Mammary epithelial cell (primary cell): ENCODE measurements at regions of chr16 and their contacts with region 1.

Region 1: DNA sequence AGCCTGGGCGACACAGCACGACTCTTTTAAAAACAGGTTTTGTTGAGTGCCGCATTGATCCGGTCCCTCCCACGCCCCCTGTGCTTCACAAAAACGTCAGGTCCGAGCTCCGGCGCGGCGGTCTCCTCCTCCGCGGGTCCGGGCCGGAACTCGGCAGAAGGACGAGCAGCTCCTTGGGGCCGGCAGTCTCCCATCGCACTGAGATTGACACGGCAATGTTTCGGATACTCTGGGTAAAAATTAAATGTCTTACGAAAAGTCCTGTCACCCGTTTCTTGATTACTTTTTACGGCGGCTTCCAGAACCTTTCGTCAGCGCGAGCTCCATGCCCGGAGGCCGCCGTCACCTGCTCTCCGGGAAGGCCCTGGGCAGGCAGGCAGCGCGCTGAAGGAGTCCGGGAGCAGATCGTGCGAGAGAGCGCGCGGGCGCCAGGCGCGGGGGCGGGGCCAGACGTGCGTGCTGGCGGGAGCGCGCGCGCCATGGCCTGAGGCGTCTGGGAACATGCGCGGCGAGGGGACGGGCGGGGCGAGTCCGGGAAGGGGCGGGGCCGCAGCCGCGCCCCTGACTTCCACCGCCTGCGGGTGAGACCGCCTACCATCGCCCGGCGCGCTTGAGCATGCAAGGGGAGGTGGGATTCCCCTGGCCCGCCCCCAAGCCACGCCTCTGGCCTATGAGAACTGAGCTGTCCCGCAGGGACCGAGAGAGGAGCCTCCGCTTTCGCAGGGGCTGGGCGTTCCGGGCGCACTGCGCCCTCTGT is 11.7 kb upstream of the SRL start:
- DNase-seq: peak; percentile 98
- H3K4me3 ChIP-seq: peak overlapping the region; percentile 66 to 86 (median 77)
- H3K27ac ChIP-seq: peak overlapping the region; percentile 71
- H3K4me1 ChIP-seq: no peaks in the 10 kb centered on the region
- H3K27me3 ChIP-seq: no peaks in the 10 kb centered on the region
- CTCF ChIP-seq: peak in 1 of 2 donors; percentile 4

Region 2: DNA sequence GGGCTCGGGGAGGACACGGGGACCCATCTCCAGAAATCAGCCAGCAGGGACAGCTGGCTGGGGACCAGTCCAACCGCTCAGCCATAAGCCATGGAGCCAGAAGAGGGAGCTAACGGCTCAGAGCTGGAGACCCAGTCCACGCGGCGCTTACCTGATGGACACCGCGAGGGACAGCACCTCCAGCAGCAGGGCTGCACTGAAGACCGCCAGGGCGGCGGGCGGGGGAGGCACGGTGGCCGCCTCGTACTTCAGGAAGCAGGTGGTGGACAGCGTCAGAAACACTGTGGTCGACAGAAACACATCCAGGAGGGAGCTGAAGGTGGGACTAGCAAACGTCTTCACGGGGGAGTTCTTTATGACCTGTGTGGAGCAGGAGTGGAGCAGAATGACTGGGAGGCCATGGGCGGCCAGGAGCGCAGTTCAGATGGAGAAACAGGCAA is 270.5 kb before region 1 on chr16:
- CTCF ChIA-PET with region 1: interaction called, 13 read pairs
- dilution Hi-C with region 1: no loop called
- in situ Hi-C with region 1: no loop called
- intact Hi-C with region 1: loop called (anchors 1 kb)
- DNase-seq: peak; percentile 58
- H3K4me3 ChIP-seq: no peak overlapping the region
- H3K27ac ChIP-seq: no peak overlapping the region
- H3K4me1 ChIP-seq: peaks cover 7% of the 10 kb centered on the region
- H3K27me3 ChIP-seq: no peaks in the 10 kb centered on the region
- CTCF ChIP-seq: peak; percentile 73 to 93

Region 3: GRCh38 chr16:4136229-4136813 is 117.3 kb before region 1 on chr16:
- CTCF ChIA-PET with region 1: no interaction called
- dilution Hi-C with region 1: no loop called
- in situ Hi-C with region 1: no loop called
- intact Hi-C with region 1: loop called (anchors 1 kb)
- DNase-seq: peak; percentile 90
- H3K4me3 ChIP-seq: no peak overlapping the region
- H3K27ac ChIP-seq: peak overlapping the region; percentile 82
- H3K4me1 ChIP-seq: peaks cover 27% of the 10 kb centered on the region
- H3K27me3 ChIP-seq: no peaks in the 10 kb centered on the region
- CTCF ChIP-seq: peak; percentile 26 to 48

Region 4: GRCh38 chr16:4217204-4218131 is 36.1 kb before region 1 on chr16:
- CTCF ChIA-PET with region 1: interaction called, 4 read pairs
- dilution Hi-C with region 1: loop called (anchors 5 kb)
- in situ Hi-C with region 1: no loop called
- intact Hi-C with region 1: no loop called
- DNase-seq: no peak
- H3K4me3 ChIP-seq: no peak overlapping the region
- H3K27ac ChIP-seq: no peak overlapping the region
- H3K4me1 ChIP-seq: peaks cover 22% of the 10 kb centered on the region
- H3K27me3 ChIP-seq: no peaks in the 10 kb centered on the region
- CTCF ChIP-seq: no peak

Region 5: DNA sequence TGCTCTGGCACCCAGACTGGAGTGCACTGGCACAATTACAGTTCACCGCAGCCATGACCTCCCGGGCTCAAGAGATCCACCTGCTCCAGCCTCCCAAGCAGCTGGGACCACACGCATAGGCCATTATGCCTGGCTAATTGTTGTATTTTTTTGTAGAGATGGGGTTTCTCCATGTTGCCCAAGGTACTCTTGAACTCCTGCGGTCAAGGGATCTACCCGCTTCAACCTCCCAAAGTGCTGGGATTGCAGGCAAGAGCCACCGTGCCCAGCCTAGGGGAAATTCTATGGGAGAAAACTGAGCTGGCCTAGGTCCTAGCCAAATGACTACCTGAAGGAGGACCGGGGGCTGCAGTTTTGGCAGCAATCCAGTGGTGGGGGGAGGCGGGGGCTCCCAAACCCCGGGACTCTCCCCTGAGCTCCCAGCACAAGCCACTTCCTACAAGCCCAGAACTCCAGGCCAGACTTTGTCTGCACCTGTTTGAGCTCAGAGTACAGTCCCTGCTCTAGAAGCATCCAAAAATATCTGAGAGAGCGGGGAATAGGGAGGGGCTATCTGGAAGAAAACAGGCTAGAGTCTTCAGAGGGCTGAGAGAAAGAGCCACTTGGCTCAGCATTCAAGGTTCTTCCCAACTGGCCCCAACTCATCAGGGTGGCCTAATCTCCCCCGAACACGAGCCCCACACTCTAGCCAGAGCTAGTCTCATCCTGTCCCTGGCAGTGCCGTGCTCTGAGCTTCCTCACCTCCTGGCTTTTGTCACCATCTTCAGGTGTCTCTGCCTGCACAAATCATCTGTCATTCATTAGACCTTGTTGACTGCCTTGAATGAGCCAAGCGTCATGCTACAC is 20.8 kb before region 1 on chr16:
- CTCF ChIA-PET with region 1: no interaction called
- dilution Hi-C with region 1: no loop called
- in situ Hi-C with region 1: no loop called
- intact Hi-C with region 1: no loop called
- DNase-seq: peak; percentile 6
- H3K4me3 ChIP-seq: no peak overlapping the region
- H3K27ac ChIP-seq: no peak overlapping the region
- H3K4me1 ChIP-seq: no peaks in the 10 kb centered on the region
- H3K27me3 ChIP-seq: peaks cover 5% of the 10 kb centered on the region
- CTCF ChIP-seq: no peak

Region 6: GRCh38 chr16:4330277-4330874 is 76.8 kb after region 1 on chr16:
- CTCF ChIA-PET with region 1: no interaction called
- dilution Hi-C with region 1: no loop called
- in situ Hi-C with region 1: no loop called
- intact Hi-C with region 1: loop called (anchors 1 kb)
- DNase-seq: peak; percentile 32
- H3K4me3 ChIP-seq: no peak overlapping the region
- H3K27ac ChIP-seq: no peak overlapping the region
- H3K4me1 ChIP-seq: peaks cover 10% of the 10 kb centered on the region
- H3K27me3 ChIP-seq: no peaks in the 10 kb centered on the region
- CTCF ChIP-seq: peak; percentile 79 to 95

Region 7: DNA sequence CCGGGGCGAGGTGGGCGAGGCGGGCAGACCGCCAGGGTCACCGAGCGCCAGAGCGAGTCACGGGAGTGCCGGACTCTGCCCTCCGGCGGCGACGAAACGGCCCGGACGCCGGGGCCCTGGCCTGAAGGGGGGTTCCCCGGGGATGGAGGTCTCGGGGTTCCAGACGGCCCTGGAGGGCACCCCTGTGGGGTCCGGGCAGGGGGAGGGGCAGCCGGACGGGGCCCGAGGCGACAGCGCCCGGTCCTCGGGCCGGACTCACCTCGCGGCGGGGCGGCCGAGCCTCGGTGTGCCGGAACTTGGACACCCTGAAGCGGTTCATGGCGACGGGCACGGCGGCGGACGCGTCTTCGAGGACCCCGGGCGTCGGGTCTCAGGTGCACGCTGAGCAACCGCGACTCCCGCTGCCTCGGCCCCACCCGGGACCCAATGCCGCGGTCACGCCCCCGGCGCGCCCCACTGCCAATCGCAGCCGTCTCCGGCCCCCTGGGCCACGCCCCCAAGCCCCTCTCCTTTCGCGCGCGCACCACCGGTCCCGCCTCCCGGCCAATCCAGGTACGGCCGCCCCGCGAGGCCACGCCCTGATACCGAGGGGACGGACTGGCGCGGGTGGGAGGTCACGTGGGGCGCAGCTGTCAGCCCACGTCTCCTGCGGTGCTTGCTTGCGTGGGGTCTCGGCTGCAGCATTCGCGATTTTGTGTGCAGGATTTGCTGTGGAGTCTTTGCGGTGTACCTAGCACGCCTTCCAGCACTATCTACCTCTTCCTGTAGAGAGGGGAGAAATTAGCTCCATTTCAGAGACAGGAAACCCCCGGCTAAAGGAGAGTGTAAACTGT is 162.8 kb after region 1 on chr16 and contains the start of gene CORO7:
- CTCF ChIA-PET with region 1: no interaction called
- dilution Hi-C with region 1: no loop called
- in situ Hi-C with region 1: loop called in 1 of 2 experiments (anchors 25 kb)
- intact Hi-C with region 1: no loop called
- DNase-seq: peak; percentile 85
- H3K4me3 ChIP-seq: peak within 1 kb of the TSS; percentile 79 to 83 (median 80)
- H3K27ac ChIP-seq: peak within 1 kb of the TSS; percentile 49
- H3K4me1 ChIP-seq: peaks cover 12% of the 10 kb centered on the region
- H3K27me3 ChIP-seq: no peaks in the 10 kb centered on the region
- CTCF ChIP-seq: no peak
- total RNA-seq, gene CORO7: 10.7 to 26.0 TPM

Region 8: DNA sequence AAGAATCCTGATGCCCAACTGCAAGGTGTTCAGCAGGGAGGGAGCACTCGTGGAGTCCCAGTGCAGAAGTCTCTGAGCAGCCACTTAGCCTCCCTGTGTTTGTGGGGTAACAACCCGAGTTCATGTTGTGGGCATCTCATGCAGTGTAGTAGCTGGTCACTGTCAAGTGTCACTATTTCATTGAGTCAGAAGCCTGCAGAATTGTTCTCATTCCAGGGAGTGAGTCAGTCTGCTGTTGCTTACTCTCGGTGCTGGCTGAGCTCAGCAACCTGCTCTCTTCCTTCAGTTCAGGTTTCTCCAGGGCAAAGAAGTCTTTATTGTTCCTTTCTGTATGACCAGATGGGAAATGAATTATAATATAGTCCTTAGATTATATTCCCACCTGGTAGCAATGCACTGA is 246.7 kb after region 1 on chr16:
- CTCF ChIA-PET with region 1: no interaction called
- dilution Hi-C with region 1: no loop called
- in situ Hi-C with region 1: no loop called
- intact Hi-C with region 1: no loop called
- DNase-seq: peak; percentile 74
- H3K4me3 ChIP-seq: no peak overlapping the region
- H3K27ac ChIP-seq: peak overlapping the region; percentile 13
- H3K4me1 ChIP-seq: peaks cover 64% of the 10 kb centered on the region
- H3K27me3 ChIP-seq: no peaks in the 10 kb centered on the region
- CTCF ChIP-seq: no peak

Region 9: GRCh38 chr16:4654011-4654963 is 400.7 kb after region 1 on chr16:
- CTCF ChIA-PET with region 1: no interaction called
- dilution Hi-C with region 1: no loop called
- in situ Hi-C with region 1: no loop called
- intact Hi-C with region 1: no loop called
- DNase-seq: no peak
- H3K4me3 ChIP-seq: no peak overlapping the region
- H3K27ac ChIP-seq: no peak overlapping the region
- H3K4me1 ChIP-seq: peaks cover 3% of the 10 kb centered on the region
- H3K27me3 ChIP-seq: no peaks in the 10 kb centered on the region
- CTCF ChIP-seq: no peak